Right cardiac atrium (tissue), 5 donors: ENCODE measurements at regions of chr6 and their contacts with region 1.

Region 1: GRCh38 chr6:138517635-138518034 is 18.3 kb upstream of the NHSL1 start:
- DNase-seq: peak in 2 of 3 donors; percentile 47 to 58
- ATAC-seq: peak; percentile 51 to 60
- H3K4me3 ChIP-seq: no peak overlapping the region
- H3K27ac ChIP-seq: no peak overlapping the region
- H3K4me1 ChIP-seq: peaks cover 4% of the 10 kb centered on the region
- H3K27me3 ChIP-seq: no peaks in the 10 kb centered on the region

Region 2: DNA sequence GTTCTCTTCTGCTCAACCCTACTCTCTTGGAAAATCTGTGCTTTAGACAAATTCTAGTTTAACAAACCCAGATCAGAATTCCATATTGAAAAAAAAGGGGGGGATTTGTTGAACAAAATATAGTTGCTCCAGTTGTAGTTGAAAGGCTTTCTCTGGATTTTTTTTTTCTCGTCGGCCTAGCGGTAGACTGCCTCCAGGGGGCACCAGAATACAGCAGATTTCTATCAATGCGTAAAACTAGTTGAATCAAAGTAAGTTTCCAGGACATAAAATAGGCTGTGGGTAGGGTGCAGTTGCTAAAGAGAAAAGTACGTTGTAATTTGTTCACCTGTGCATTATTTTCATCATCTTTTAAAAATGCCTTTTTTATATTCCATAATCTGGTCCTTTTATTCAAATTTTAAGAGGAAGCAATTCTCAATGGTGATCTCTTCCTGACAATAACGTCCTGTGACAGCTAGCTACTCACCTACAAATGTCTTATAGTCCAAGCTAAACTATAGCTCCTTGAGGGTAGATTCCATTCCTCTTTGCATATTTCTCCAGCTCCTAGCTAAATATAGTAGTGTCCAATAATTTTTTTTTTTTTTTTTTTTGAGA is 515.8 kb before region 1 on chr6:
- intact Hi-C with region 1: no loop called
- DNase-seq: peak in 2 of 3 donors; percentile 32 to 58
- ATAC-seq: no peak
- H3K4me3 ChIP-seq: no peak overlapping the region
- H3K27ac ChIP-seq: no peak overlapping the region
- H3K4me1 ChIP-seq: no peaks in the 10 kb centered on the region
- H3K27me3 ChIP-seq: no peaks in the 10 kb centered on the region

Region 3: GRCh38 chr6:138129190-138129589 is 388.4 kb before region 1 on chr6:
- intact Hi-C with region 1: loop called in 1 of 4 experiments (anchors 10 kb)
- DNase-seq: peak in 1 of 3 donors; percentile 18
- ATAC-seq: no peak
- H3K4me3 ChIP-seq: no peak overlapping the region
- H3K27ac ChIP-seq: no peak overlapping the region
- H3K4me1 ChIP-seq: peaks cover 2% of the 10 kb centered on the region
- H3K27me3 ChIP-seq: no peaks in the 10 kb centered on the region

Region 4: DNA sequence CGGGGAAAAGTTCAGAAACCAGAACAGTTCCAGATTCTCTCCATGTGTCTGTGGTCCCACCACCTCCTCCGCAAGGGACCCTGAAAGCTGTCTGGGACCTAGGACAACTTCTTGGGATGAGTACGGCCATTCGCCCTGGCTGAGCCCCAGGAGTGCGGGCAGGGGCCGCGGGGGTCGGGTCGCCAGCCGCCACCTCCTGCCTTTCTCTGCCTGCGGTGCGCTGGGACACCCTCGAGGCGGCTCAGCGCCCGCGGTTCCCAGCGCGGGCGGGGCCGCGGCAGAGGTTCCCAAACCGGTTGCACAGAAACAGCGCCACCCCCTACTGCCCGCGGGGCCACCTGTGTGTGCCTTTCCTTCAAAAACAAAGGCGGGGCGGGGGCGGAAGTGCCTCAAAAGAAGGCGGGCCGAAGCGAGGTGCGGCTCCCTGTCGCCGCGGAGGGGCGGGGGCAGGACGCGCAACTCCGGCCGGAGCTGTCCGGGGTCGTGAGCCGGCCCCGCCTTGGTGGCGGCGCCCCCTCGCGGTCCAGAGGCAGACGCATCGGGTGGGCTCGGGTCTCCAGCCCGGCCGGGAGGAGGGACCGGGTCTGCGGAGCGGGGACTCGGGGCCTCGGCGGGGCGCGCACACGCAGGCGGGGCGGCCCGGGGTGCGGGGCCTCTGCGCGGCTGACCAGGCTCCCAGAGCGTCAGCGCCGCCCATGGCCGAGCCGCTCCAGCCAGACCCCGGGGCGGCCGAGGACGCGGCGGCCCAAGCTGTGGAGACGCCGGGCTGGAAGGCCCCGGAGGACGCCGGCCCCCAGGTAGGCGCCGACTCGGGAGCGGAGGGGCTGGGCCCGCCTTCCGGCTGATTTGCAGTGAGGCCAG is 113.6 kb before region 1 on chr6 and contains the start of gene HEBP2:
- intact Hi-C with region 1: no loop called
- DNase-seq: peak; percentile 94 to 98 (median 97)
- ATAC-seq: peak; percentile 96 to 97
- H3K4me3 ChIP-seq: peak within 1 kb of the TSS; percentile 79
- H3K27ac ChIP-seq: peak within 1 kb of the TSS; percentile 94
- H3K4me1 ChIP-seq: no peaks in the 10 kb centered on the region
- H3K27me3 ChIP-seq: no peaks in the 10 kb centered on the region
- total RNA-seq, gene HEBP2: 74.7 to 91.6 (median 82.0) TPM

Region 5: GRCh38 chr6:138572167-138572865 is 54.7 kb after region 1 on chr6:
- intact Hi-C with region 1: loop called in 1 of 4 experiments (anchors 10 kb)
- DNase-seq: peak; percentile 71 to 84 (median 76)
- ATAC-seq: peak; percentile 92 to 94
- H3K4me3 ChIP-seq: peak overlapping the region; percentile 84
- H3K27ac ChIP-seq: peak overlapping the region; percentile 73
- H3K4me1 ChIP-seq: peaks cover 2% of the 10 kb centered on the region
- H3K27me3 ChIP-seq: no peaks in the 10 kb centered on the region